ENCODE measurements at regions of chr5 and their contacts with region 1.

Region 1: GRCh38 chr5:64147849-64148441 is 17.7 kb upstream of the RNF180 start:
- DNase-seq: peak; percentile 70
- ATAC-seq: peak; percentile 42 to 55

Region 2: GRCh38 chr5:64050296-64050695 is 97.6 kb before region 1 on chr5:
- intact Hi-C with region 1: no loop called
- DNase-seq: no peak
- ATAC-seq: no peak

Region 3: GRCh38 chr5:64074533-64074932 is 73.4 kb before region 1 on chr5:
- intact Hi-C with region 1: loop called in 1 of 2 experiments (anchors 5 kb)
- DNase-seq: no peak
- ATAC-seq: peak in 1 of 2 donors; percentile 45

Region 4: DNA sequence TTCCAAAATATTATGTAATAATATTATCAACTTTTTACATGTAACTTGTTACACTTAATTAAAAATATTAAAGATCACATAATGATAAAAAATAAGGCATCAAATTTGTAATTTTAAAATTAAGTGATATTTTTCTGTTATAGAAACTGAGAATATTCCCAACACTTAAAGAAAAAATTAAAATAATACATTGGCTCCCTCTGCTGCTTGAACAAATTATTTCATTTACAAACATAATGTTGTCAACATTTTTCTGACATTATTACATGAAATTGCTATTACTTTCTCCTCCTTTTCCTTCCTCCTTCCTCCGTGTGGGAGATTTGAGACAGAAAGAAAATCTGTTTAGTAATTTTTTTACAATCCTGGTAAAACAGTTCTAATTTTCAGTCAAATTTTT is 60.0 kb after region 1 on chr5:
- intact Hi-C with region 1: loop called (anchors 5 to 10 kb)
- DNase-seq: no peak
- ATAC-seq: no peak

Region 5: DNA sequence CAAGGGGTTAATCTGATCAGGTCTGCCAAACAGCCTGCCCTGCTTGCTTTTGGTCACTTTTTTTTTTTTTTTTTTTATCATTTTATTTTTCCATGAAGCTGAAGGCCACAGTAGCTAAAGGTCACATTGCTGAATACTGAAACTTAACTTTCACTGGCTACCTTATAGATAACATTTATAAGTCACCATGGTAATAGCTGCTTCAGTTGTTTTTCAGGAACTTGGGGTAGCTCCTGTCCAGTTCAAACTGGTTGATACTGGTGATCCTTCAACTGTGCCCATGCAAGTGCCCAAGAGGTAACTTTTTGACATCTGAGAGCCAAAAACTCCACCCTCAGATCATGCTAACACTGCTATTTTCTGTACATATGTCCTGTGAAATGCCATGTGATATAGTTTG is 289.6 kb after region 1 on chr5:
- intact Hi-C with region 1: no loop called
- DNase-seq: no peak
- ATAC-seq: no peak

Region 6: GRCh38 chr5:64505769-64506566 is 358.0 kb after region 1 on chr5 and contains the start of gene RGS7BP:
- intact Hi-C with region 1: loop called in 1 of 2 experiments (anchors 5 kb)
- DNase-seq: peak; percentile 48
- ATAC-seq: peak; percentile 90 to 96
- total RNA-seq, gene RGS7BP: 2.0 to 5.1 TPM

Region 7: DNA sequence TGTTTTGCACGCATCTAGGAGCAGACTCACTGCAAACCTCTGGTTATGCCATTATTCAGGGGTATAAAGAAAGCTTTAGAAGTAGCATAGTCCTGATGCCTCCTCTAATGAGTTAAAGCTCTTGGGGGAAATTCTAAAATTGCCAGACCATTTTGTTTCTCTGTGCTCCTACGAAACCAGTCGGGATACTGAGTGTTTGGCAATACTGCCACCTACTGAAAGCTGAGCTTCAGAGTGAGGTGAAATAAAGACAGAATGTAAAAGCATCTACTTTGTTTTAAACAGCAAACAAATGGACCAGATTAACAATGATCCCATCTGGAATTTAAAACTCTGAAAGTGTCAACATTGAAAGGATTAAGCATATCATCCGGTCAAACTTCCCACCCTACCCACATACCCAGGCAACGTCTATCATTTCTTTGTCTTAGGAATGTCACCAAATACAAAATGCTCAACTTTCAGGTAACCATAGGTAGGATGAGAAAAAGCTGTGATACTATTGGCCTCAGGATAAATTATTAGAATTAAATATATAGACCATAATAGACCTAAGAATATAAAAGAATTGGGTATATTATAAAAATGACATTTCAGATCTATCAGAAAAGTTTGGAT is 464.5 kb after region 1 on chr5:
- intact Hi-C with region 1: loop called (anchors 2 to 10 kb)
- DNase-seq: no peak
- ATAC-seq: peak; percentile 47 to 71